ENCODE measurements at regions of chr3 and their contacts with region 1.

Region 1: GRCh38 chr3:192444096-192444790 is 283.1 kb downstream of the FGF12 start:
- DNase-seq: peak; percentile 69 to 97 (median 80)

Region 2: DNA sequence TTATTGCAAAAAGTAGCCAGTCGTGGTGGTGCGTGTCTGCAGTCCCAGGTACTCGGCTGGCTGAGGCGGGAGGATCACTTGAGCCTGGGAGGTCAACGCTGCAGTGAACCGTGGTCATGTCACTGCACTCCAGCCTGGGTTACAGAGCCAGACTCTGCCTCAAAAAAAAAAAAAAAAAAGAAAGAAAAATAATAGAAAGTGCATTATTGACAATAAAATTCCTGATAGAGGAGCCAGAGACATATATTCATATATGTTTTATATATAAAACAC is 1026.8 kb before region 1 on chr3:
- intact Hi-C with region 1: loop called (anchors 2 kb)
- DNase-seq: no peak

Region 3: DNA sequence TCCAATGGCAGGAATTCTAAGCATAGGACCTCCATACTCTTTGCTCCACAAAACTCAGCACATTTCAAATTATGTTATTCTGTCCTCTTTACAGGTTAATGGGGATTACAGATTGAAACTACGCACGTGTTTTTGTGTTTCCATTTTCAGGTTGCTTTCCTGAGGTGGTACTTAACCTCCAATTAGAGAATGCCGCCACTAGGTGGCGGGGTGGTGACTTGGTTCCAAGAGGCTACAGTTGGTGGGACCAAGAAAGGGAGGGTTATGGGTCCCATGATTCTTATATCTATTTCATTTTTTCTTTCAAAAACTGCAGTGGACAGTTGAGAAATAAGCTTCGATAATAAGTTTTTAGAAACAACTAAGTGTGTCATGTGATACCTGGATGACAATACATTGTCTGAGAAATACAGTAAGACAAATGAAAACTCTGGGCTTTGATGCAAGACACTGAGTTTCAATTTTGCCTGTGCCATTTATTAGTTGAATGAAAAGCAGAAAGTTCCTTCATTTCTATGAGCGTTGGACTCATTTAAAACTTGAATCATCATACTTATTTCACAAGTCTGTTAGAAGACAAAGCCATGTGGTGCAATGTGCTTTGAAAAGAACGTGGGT is 255.9 kb before region 1 on chr3:
- intact Hi-C with region 1: loop called (anchors 1 kb)
- DNase-seq: peak in 4 of 10 donors; percentile 20 to 63 (median 41)

Region 4: GRCh38 chr3:192395506-192395905 is 48.7 kb before region 1 on chr3:
- intact Hi-C with region 1: no loop called
- DNase-seq: no peak